Activated T-helper 1 cell treated with anti-CD3 and anti-CD28 coated beads, Interleukin-12 subunit alpha, Interleukin-12 subunit beta, Interleukin-2, Interleukin-4 antibody, amounts not matched to agents 30 ng/mL and 10 ng/mL and 1 ng/mL, durations not matched to agents 14 hours and 24 hours and 36 hours (primary cell): ENCODE measurements at regions of chr11 and their contacts with region 1.

Region 1: GRCh38 chr11:117107701-117108590 is 9.7 kb upstream of the SIK3 start:
- DNase-seq: no peak
- H3K4me3 Mint-ChIP-seq: no peak overlapping the region
- H3K27ac Mint-ChIP-seq: no peak overlapping the region
- H3K4me1 Mint-ChIP-seq: no peaks in the 10 kb centered on the region
- H3K27me3 Mint-ChIP-seq: peaks cover 2% of the 10 kb centered on the region

Region 2: GRCh38 chr11:116732271-116733042 is 375.5 kb before region 1 on chr11:
- intact Hi-C with region 1: loop called (anchors 1 kb)
- DNase-seq: peak; percentile 31
- H3K4me3 Mint-ChIP-seq: no peak overlapping the region
- H3K27ac Mint-ChIP-seq: no peak overlapping the region
- H3K4me1 Mint-ChIP-seq: peaks cover 12% of the 10 kb centered on the region
- H3K27me3 Mint-ChIP-seq: no peaks in the 10 kb centered on the region

Region 3: DNA sequence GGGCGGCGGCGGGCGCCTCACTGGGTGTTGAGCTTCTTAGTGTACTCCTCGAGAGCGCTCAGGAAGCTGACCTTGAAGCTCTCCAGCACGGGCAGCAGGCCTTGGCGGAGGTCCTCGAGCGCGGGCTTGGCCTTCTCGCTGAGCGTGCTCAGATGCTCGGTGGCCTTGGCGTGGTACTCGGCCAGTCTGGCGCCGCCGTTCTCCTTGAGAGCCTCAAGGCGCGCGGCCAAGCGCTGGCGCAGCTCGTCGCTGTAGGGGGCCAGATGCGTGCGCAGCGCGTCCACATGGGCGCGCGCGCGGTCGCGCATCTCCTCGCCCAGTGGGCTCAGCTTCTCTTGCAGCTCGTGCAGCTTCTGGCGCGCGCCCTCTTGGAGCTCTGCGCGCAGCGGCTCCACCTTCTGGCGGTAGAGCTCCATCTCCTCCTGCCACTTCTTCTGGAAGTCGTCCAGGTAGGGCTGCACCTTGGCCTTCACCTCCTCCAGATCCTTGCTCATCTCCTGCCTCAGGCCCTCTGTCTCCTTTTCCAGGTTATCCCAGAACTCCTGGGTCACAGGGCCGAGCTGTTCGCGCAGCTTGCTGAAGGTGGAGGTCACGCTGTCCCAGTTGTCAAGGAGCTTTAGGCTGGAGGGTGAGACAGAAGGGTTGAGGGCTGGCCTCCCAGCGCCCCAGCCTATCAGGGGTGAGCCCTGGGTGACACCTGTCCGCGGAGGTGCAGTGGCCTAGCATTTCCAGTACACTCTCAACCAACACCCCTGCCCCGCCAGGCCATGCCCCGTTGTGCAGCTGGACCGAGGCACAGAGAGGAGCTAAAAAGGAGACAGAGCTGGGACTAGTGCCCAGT is 271.9 kb before region 1 on chr11:
- intact Hi-C with region 1: loop called (anchors 1 kb)
- DNase-seq: peak; percentile 73
- H3K4me3 Mint-ChIP-seq: peak overlapping the region; percentile 54
- H3K27ac Mint-ChIP-seq: no peak overlapping the region
- H3K4me1 Mint-ChIP-seq: peaks cover 5% of the 10 kb centered on the region
- H3K27me3 Mint-ChIP-seq: peaks cover 4% of the 10 kb centered on the region

Region 4: GRCh38 chr11:116879800-116880625 is 227.9 kb before region 1 on chr11:
- intact Hi-C with region 1: loop called (anchors 1 kb)
- DNase-seq: no peak
- H3K4me3 Mint-ChIP-seq: no peak overlapping the region
- H3K27ac Mint-ChIP-seq: peak overlapping the region; percentile 66
- H3K4me1 Mint-ChIP-seq: peaks cover 25% of the 10 kb centered on the region
- H3K27me3 Mint-ChIP-seq: no peaks in the 10 kb centered on the region

Region 5: GRCh38 chr11:116960930-116961329 is 147.0 kb before region 1 on chr11:
- intact Hi-C with region 1: no loop called
- DNase-seq: no peak
- H3K4me3 Mint-ChIP-seq: no peak overlapping the region
- H3K27ac Mint-ChIP-seq: no peak overlapping the region
- H3K4me1 Mint-ChIP-seq: peaks cover 21% of the 10 kb centered on the region
- H3K27me3 Mint-ChIP-seq: no peaks in the 10 kb centered on the region

Region 6: GRCh38 chr11:117143871-117144476 is 36.0 kb after region 1 on chr11 and contains the start of gene PAFAH1B2:
- intact Hi-C with region 1: loop called (anchors 5 kb)
- DNase-seq: peak; percentile 93
- H3K4me3 Mint-ChIP-seq: peak within 1 kb of the TSS; percentile 97
- H3K27ac Mint-ChIP-seq: peak within 1 kb of the TSS; percentile 90
- H3K4me1 Mint-ChIP-seq: peaks cover 29% of the 10 kb centered on the region
- H3K27me3 Mint-ChIP-seq: peaks cover 8% of the 10 kb centered on the region
- total RNA-seq, gene PAFAH1B2: 71.8 and 83.6 TPM in 2 replicates

Region 7: DNA sequence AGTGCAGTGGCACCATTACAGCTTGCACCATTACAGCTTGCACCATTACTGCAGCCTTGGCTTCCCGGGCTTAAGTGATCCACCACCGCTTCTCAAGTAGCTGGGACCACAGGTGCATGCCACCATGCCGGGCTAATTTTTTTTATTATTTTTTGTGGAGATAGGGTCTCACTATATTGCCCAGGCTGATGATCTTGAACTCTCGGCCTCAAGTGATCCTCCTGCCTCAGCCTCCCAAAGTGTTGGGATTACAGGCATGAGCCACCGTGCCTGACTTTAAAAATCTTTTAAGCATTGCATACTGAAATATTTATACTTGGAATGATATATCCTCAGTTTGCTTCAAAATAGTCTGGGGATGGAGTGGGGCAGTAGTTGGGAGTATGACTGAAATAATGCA is 46.5 kb after region 1 on chr11:
- intact Hi-C with region 1: no loop called
- DNase-seq: no peak
- H3K4me3 Mint-ChIP-seq: no peak overlapping the region
- H3K27ac Mint-ChIP-seq: no peak overlapping the region
- H3K4me1 Mint-ChIP-seq: peaks cover 4% of the 10 kb centered on the region
- H3K27me3 Mint-ChIP-seq: no peaks in the 10 kb centered on the region

Region 8: DNA sequence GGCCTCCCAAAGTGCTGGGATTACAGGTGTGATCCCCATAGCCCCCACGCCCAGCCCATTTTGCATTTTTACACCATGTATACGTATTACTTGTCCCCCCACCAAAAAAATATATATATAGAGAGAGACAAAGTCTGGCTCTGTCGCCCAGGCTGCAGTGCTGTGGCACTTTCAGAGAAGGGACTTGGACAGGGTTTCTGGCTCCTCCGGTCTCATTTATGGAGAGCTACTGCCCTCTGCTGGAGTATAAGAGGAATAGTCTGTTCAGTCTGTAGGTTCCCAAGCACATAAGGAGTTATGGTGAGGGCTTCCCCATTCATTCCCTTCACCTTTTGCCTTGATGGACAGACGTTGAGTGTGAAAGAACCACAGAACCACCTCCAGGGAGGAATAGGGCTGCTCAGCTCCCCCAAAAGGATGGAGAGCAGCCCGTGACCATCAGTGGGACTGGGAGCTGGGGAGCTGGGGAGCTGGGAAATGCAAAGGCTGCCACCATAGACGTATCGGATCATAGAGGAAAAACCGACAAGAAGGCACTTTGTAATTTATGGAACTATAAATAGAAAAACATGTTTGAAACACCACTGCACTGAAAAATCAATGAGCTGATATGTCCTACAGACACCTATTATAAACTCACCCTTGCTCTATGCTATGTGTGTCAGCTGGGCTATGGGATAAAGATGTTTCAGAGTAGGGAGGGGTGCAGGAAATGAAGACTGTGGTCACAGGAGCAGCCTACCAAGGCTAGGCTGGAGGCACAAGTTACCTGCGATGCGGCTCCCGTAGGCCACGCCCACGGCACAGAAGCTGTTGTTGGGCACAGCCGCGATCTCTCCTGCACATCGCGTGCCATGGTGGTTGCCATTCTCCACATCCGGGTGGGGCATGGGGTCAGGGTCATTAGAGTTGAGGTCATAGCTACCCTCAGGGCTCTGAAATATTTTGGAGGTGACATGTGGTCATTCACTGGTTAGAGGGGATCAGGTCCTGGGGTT is 118.7 kb after region 1 on chr11:
- intact Hi-C with region 1: loop called (anchors 1 kb)
- DNase-seq: peak; percentile 14
- H3K4me3 Mint-ChIP-seq: no peak overlapping the region
- H3K27ac Mint-ChIP-seq: peak overlapping the region; percentile 31
- H3K4me1 Mint-ChIP-seq: peaks cover 36% of the 10 kb centered on the region
- H3K27me3 Mint-ChIP-seq: no peaks in the 10 kb centered on the region